CD4-positive, alpha-beta T cell (primary cell): ENCODE measurements at regions of chr22 and their contacts with region 1.

Region 1: DNA sequence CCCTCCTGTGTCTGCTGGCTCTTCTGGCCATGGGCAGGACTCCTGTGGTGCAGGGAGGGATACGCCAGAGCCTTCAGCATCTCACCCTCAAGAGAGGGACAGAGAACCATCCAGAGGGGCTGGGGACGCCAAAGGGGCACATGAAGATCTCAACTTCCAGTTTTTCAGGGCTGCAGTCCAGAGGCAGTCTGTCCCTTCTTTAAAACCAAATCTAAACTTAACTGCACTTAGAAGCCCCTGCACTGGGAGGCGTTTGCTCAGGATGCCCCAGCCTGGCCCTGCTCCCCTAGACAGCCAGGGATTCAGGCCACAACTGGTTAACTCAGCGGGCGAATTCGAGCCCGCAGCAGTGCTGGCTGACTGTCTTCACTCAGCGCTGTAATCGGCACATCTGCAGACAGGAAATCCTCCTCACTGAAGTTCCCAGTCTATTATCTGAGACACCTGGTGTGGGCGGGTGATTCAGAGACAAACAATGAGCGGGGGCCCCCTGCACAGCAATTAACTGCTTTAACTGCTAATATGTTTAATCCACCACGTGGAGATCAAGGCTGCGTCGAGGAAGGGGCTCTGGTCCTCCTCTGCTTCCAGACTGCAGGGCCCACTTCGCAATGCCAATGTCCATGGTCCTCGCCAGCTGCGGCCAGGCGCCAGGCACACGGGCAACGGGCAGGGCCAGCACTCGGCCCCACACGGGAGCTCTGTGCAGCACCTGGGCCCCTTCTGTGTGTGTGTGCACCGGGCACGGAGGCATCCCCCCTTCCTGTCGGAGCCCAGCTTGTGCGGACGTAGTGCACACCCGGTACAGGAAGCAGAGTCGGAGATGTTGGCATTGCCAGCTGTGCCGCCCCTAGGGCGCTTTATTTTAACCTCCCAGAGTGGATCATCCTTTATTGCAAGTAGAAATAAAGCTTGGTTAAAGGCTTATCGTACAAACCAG is 36.9 kb upstream of the GNB1L start:
- DNase-seq: peak; percentile 67 to 92 (median 82)
- ATAC-seq: peak; percentile 77
- H3K4me3 ChIP-seq: peak overlapping the region; percentile 56
- H3K4me3 Mint-ChIP-seq: peak overlapping the region; percentile 78
- H3K27ac ChIP-seq: peak overlapping the region; percentile 76 to 99
- H3K27ac Mint-ChIP-seq: peak overlapping the region; percentile 97
- H3K4me1 ChIP-seq: peaks cover 100% of the 10 kb centered on the region
- H3K4me1 Mint-ChIP-seq: peaks cover 86% of the 10 kb centered on the region
- H3K27me3 ChIP-seq: no peaks in the 10 kb centered on the region
- H3K27me3 Mint-ChIP-seq: no peaks in the 10 kb centered on the region
- CTCF ChIP-seq: no peak

Region 2: DNA sequence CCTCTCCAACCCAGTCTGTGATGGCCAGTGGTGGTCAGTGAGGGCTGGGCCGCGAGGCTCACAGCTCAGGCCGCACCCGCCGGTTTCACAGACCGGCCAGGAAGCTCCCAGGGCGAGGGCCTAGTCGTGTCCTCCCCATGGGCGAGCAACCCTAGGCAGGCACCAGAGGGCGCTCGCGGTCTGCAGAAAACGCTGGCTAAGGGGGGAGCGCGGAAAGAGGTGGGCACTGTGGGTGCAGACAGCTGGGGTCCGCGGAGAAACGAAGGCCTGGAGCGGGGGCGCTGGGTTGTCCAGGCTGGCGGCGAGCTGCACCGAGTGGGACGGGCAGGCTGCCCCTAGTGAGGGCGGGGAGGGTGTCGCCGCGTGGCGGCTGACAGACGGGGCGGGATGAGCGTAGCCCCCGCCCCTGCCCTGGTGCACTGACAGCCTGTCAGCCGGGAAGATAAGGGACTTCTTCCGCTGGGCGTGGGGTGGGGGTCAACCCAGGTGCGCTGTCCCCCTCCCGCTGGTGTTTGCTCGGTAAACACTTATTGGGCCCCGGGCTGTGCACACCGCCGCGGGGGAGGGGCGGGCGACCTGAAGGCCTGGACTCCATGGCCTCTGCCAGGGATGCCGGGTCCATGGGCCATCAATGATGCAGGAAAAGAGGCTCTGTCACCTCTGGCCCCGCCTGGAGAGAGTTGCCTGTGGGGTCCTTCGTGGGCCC is 160.8 kb before region 1 on chr22:
- CTCF ChIA-PET with region 1: interaction called, 19 read pairs
- POLR2A ChIA-PET with region 1: interaction called, 9 read pairs
- intact Hi-C with region 1: no loop called
- DNase-seq: peak; percentile 75 to 92 (median 84)
- ATAC-seq: peak; percentile 90
- H3K4me3 ChIP-seq: peak overlapping the region; percentile 31
- H3K4me3 Mint-ChIP-seq: peak overlapping the region; percentile 89
- H3K27ac ChIP-seq: no peak overlapping the region
- H3K27ac Mint-ChIP-seq: no peak overlapping the region
- H3K4me1 ChIP-seq: peaks cover 10% of the 10 kb centered on the region
- H3K4me1 Mint-ChIP-seq: no peaks in the 10 kb centered on the region
- H3K27me3 ChIP-seq: peaks cover 0 to 2% of the 10 kb centered on the region in 2 experiments
- H3K27me3 Mint-ChIP-seq: no peaks in the 10 kb centered on the region
- CTCF ChIP-seq: peak; percentile 96

Region 3: GRCh38 chr22:19832476-19833108 is 59.0 kb before region 1 on chr22:
- CTCF ChIA-PET with region 1: no interaction called
- POLR2A ChIA-PET with region 1: no interaction called
- intact Hi-C with region 1: no loop called
- DNase-seq: peak in 1 of 14 experiments; percentile 24
- ATAC-seq: no peak
- H3K4me3 ChIP-seq: no peak overlapping the region
- H3K4me3 Mint-ChIP-seq: no peak overlapping the region
- H3K27ac ChIP-seq: no peak overlapping the region
- H3K27ac Mint-ChIP-seq: peak overlapping the region; percentile 24
- H3K4me1 ChIP-seq: peaks cover 5% of the 10 kb centered on the region
- H3K4me1 Mint-ChIP-seq: peaks cover 23% of the 10 kb centered on the region
- H3K27me3 ChIP-seq: no peaks in the 10 kb centered on the region
- H3K27me3 Mint-ChIP-seq: no peaks in the 10 kb centered on the region
- CTCF ChIP-seq: no peak

Region 4: GRCh38 chr22:19844377-19845053 is 47.1 kb before region 1 on chr22:
- CTCF ChIA-PET with region 1: no interaction called
- POLR2A ChIA-PET with region 1: interaction called, 14 read pairs
- intact Hi-C with region 1: no loop called
- DNase-seq: peak in 5 of 14 experiments; percentile 16 to 57 (median 51)
- ATAC-seq: peak; percentile 70
- H3K4me3 ChIP-seq: peak overlapping the region; percentile 30
- H3K4me3 Mint-ChIP-seq: peak overlapping the region; percentile 59
- H3K27ac ChIP-seq: peak overlapping the region in 1 of 2 donors; percentile 22
- H3K27ac Mint-ChIP-seq: peak overlapping the region; percentile 83
- H3K4me1 ChIP-seq: peaks cover 29% of the 10 kb centered on the region
- H3K4me1 Mint-ChIP-seq: peaks cover 31% of the 10 kb centered on the region
- H3K27me3 ChIP-seq: no peaks in the 10 kb centered on the region
- H3K27me3 Mint-ChIP-seq: no peaks in the 10 kb centered on the region
- CTCF ChIP-seq: no peak

Region 5: DNA sequence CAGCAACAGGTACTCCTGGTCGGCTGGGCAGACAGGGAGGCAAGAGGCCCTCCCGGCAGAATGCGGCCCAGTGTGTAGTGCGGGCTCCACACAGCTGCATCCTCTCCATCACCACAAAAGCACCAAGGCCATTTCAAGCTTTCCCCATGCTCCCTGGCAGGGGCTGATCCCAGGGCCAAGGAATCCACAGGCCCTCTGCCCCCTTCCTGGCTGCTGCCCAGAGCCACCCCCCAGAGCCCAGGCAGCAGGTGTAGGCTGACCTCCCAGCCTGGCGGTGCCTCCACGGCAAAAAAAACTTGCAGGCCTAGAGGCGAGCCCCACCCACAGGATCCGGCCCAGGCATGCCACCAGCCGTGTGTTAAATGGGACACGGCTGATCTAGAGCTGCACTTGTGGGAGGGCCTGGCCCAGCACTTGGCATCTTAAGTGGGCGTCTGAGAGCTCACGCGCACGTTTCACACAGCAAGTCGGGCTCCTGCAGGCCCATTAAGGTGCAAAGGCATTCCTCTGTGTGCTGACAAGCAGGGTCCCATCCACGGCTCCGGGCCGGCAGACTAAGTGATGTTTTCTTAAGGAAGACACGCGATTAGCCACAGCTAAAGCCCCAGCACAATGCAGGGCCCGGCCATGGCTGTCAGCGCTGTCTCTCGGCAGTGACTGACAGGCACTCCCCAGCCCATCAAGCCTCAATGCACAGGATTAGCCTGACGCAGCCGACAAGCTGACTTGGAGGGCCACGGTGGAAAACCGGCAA is 17.1 kb before region 1 on chr22:
- CTCF ChIA-PET with region 1: interaction called, 3 read pairs
- POLR2A ChIA-PET with region 1: interaction called, 17 read pairs
- intact Hi-C with region 1: loop called in 1 of 2 experiments (anchors 2 kb)
- DNase-seq: peak in 12 of 14 experiments; percentile 24 to 68 (median 50)
- ATAC-seq: peak; percentile 94
- H3K4me3 ChIP-seq: peak overlapping the region; percentile 20
- H3K4me3 Mint-ChIP-seq: peak overlapping the region; percentile 20
- H3K27ac ChIP-seq: peak overlapping the region; percentile 30 to 41
- H3K27ac Mint-ChIP-seq: peak overlapping the region; percentile 76
- H3K4me1 ChIP-seq: peaks cover 28% of the 10 kb centered on the region
- H3K4me1 Mint-ChIP-seq: peaks cover 9% of the 10 kb centered on the region
- H3K27me3 ChIP-seq: no peaks in the 10 kb centered on the region
- H3K27me3 Mint-ChIP-seq: no peaks in the 10 kb centered on the region
- CTCF ChIP-seq: no peak

Region 6: DNA sequence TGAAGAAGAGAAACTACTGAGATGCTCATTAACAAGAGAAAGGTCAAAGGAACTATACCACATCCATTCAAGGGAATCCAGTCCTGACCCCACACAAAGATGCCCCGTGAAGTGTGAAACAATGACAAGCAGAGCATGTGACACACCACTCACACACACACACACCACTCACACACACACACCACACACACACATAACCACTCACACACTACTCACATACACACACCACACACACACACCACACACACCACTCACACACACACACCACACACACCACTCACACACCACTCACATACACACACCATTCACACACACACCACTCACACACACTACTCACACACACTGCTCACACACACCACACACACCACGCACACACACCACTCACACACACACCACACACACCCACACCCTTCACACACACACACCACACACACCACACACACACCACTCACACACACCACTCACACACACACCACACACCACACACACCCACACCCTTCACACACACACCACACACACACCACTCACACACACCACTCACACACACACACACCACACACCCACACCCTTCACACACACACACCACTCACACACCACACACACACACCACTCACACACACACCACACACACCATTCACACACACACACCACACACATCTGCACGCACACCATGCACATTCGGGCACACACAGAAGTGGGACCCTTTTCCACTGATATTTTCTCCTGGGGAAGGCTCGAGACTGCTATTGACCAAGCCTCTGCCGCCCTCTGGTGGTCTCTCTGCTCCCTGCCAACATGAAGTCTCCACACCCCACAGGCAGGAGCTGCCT is 18.0 kb after region 1 on chr22:
- CTCF ChIA-PET with region 1: interaction called, 16 read pairs
- POLR2A ChIA-PET with region 1: interaction called, 4 read pairs
- intact Hi-C with region 1: no loop called
- DNase-seq: peak; percentile 76 to 94 (median 83)
- ATAC-seq: peak; percentile 93
- H3K4me3 ChIP-seq: no peak overlapping the region
- H3K4me3 Mint-ChIP-seq: no peak overlapping the region
- H3K27ac ChIP-seq: no peak overlapping the region
- H3K27ac Mint-ChIP-seq: peak overlapping the region; percentile 19
- H3K4me1 ChIP-seq: peaks cover 7% of the 10 kb centered on the region
- H3K4me1 Mint-ChIP-seq: peaks cover 10% of the 10 kb centered on the region
- H3K27me3 ChIP-seq: no peaks in the 10 kb centered on the region
- H3K27me3 Mint-ChIP-seq: no peaks in the 10 kb centered on the region
- CTCF ChIP-seq: peak; percentile 77